CD4-positive, alpha-beta memory T cell (primary cell): ENCODE measurements at regions of chr4 and their contacts with region 1.

Region 1: GRCh38 chr4:108036213-108036612 is 46.5 kb downstream of the HADH start:
- DNase-seq: peak; percentile 45 to 74 (median 60)
- H3K4me3 ChIP-seq: no peak overlapping the region
- H3K4me3 Mint-ChIP-seq: peak overlapping the region in 7 of 8 donors; percentile 21 to 75 (median 60)
- H3K27ac ChIP-seq: peak overlapping the region; percentile 0
- H3K27ac Mint-ChIP-seq: peak overlapping the region; percentile 59 to 93 (median 88)
- H3K4me1 ChIP-seq: peaks cover 13% of the 10 kb centered on the region
- H3K4me1 Mint-ChIP-seq: peaks cover 8 to 23% (median 13%) of the 10 kb centered on the region in 4 donors
- H3K27me3 ChIP-seq: no peaks in the 10 kb centered on the region
- H3K27me3 Mint-ChIP-seq: no peaks in the 10 kb centered on the region

Region 2: GRCh38 chr4:108072300-108072699 is 36.1 kb after region 1 on chr4:
- CTCF ChIA-PET with region 1: interaction called, 5 read pairs
- POLR2A ChIA-PET with region 1: interaction called, 3 read pairs
- intact Hi-C with region 1: loop called (anchors 5 kb)
- DNase-seq: peak; percentile 58 to 87 (median 69)
- H3K4me3 ChIP-seq: no peak overlapping the region
- H3K4me3 Mint-ChIP-seq: peak overlapping the region in 7 of 8 donors; percentile 57 to 83 (median 78)
- H3K27ac ChIP-seq: peak overlapping the region; percentile 53
- H3K27ac Mint-ChIP-seq: peak overlapping the region; percentile 79 to 95 (median 94)
- H3K4me1 ChIP-seq: peaks cover 58% of the 10 kb centered on the region
- H3K4me1 Mint-ChIP-seq: peaks cover 36 to 74% (median 59%) of the 10 kb centered on the region in 4 donors
- H3K27me3 ChIP-seq: no peaks in the 10 kb centered on the region
- H3K27me3 Mint-ChIP-seq: no peaks in the 10 kb centered on the region